ENCODE measurements at regions of chr2 and their contacts with region 1.

Region 1: GRCh38 chr2:48600204-48600813 is 17.3 kb upstream of the GTF2A1L start:
- DNase-seq: peak; percentile 65
- H3K4me3 ChIP-seq: no peak overlapping the region
- H3K27ac ChIP-seq: peak overlapping the region; percentile 75
- H3K4me1 ChIP-seq: peaks cover 17% of the 10 kb centered on the region
- H3K27me3 ChIP-seq: no peaks in the 10 kb centered on the region

Region 2: GRCh38 chr2:48946449-48947048 is 346.2 kb after region 1 on chr2:
- in situ Hi-C with region 1: loop called (anchors 25 kb)
- DNase-seq: peak; percentile 62
- H3K4me3 ChIP-seq: no peak overlapping the region
- H3K27ac ChIP-seq: no peak overlapping the region
- H3K4me1 ChIP-seq: no peaks in the 10 kb centered on the region
- H3K27me3 ChIP-seq: peaks cover 5% of the 10 kb centered on the region; the same call in 1 of the 2 replicates

Region 3: GRCh38 chr2:50143822-50144575 is 1543.7 kb after region 1 on chr2:
- in situ Hi-C with region 1: loop called (anchors 25 kb)
- DNase-seq: peak; percentile 71
- H3K4me3 ChIP-seq: peak overlapping the region; percentile 91
- H3K27ac ChIP-seq: no peak overlapping the region
- H3K4me1 ChIP-seq: peaks cover 5% of the 10 kb centered on the region; the same call in 1 of the 2 replicates
- H3K27me3 ChIP-seq: no peaks in the 10 kb centered on the region